GM10248 (cell line): ENCODE measurements at regions of chr14 and their contacts with region 1.

Region 1: DNA sequence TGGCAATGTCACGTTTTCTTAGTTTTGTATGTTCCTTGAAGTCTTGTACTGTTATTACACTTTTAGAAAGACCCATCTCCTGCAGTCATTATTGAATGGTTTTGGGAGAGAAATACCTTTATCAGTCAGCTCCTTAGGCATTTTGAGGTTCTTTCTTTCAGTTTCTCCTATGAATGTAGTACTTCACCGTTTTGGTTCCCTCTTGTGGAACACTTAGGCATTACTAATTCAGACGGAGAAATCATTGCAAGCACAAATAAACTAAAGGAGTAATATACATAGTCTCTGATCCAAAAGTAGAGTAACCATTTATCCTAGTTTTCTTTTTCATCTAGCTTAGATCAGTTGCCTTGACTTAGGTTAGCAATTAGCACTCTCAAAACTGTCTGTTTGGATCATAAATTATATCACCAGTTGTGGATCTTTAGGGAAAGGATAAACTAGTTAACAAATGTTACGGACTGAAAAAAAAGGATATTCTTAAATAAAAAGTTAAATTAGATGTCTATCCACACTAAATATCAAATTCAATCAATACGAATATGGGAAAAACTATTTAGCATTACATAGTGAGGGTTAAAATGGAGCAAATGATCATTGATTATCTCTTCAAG is 1538.3 kb upstream of the SEL1L start:
- DNase-seq: peak; percentile 8
- CTCF ChIP-seq: peak; percentile 62

Region 2: GRCh38 chr14:83058068-83058467 is 13.9 kb before region 1 on chr14:
- CTCF ChIA-PET with region 1: interaction called, 10 read pairs
- POLR2A ChIA-PET with region 1: no interaction called
- DNase-seq: no peak
- CTCF ChIP-seq: no peak

Region 3: GRCh38 chr14:83172363-83172762 is 100.4 kb after region 1 on chr14:
- CTCF ChIA-PET with region 1: no interaction called
- POLR2A ChIA-PET with region 1: no interaction called
- DNase-seq: no peak
- CTCF ChIP-seq: no peak